Activated T-helper 1 cell treated with anti-CD3 and anti-CD28 coated beads, Interleukin-12 subunit alpha, Interleukin-12 subunit beta, Interleukin-2, Interleukin-4 antibody, amounts not matched to agents 30 ng/mL and 10 ng/mL and 1 ng/mL, durations not matched to agents 14 hours and 24 hours and 36 hours (primary cell): ENCODE measurements at regions of chr6 and their contacts with region 1.

Region 1: DNA sequence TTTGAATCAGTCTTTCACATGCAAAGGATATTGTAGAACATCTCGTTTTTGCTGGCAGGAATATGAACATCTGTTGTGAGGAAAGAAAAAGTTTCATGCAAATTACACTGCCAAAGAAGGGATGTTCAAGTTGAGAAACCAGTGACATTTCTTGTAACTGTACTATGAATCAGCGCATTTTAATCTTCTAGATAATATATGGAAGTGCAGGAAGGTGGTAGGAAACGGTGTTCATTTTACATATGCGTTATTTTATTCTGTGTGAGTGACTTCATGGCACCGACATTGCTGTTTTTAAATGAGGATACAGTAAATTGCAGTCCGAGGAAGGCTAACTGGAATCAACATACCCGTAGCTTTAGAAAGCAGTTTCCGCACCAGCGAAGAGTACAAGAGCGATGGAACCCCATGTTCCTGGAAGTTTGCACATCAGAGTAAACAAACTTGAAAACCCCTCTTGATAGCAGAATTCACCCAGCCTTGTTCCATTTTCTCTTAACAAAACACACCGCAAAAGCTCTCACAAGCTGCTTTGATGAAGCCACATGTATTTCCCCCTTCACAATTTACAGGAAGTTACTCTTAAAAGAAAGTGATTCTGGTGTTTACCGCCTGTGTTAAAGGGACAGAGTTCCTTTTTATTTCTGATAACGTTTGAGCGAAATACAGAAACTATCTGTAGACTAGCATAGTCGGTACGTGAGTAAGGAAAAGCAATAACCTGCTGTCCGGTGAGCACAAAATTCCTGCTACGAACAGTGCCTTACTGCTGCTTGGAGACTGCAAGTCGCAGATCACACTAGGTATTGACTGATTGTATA is 11.5 kb downstream of the PRDM1 start:
- DNase-seq: peak; percentile 72
- H3K4me3 Mint-ChIP-seq: peak overlapping the region; percentile 89
- H3K27ac Mint-ChIP-seq: peak overlapping the region; percentile 96
- H3K4me1 Mint-ChIP-seq: peaks cover 91% of the 10 kb centered on the region
- H3K27me3 Mint-ChIP-seq: no peaks in the 10 kb centered on the region

Region 2: GRCh38 chr6:105431226-105431625 is 666.4 kb before region 1 on chr6:
- intact Hi-C with region 1: loop called (anchors 2 kb)
- DNase-seq: peak; percentile 12
- H3K4me3 Mint-ChIP-seq: no peak overlapping the region
- H3K27ac Mint-ChIP-seq: no peak overlapping the region
- H3K4me1 Mint-ChIP-seq: peaks cover 5% of the 10 kb centered on the region
- H3K27me3 Mint-ChIP-seq: peaks cover 35% of the 10 kb centered on the region

Region 3: GRCh38 chr6:105793130-105793529 is 304.5 kb before region 1 on chr6:
- intact Hi-C with region 1: loop called (anchors 1 kb)
- DNase-seq: no peak
- H3K4me3 Mint-ChIP-seq: peak overlapping the region; percentile 5
- H3K27ac Mint-ChIP-seq: peak overlapping the region; percentile 66
- H3K4me1 Mint-ChIP-seq: peaks cover 86% of the 10 kb centered on the region
- H3K27me3 Mint-ChIP-seq: no peaks in the 10 kb centered on the region

Region 4: GRCh38 chr6:105992315-105992961 is 105.2 kb before region 1 on chr6:
- intact Hi-C with region 1: loop called (anchors 1 kb)
- DNase-seq: peak; percentile 91
- H3K4me3 Mint-ChIP-seq: peak overlapping the region; percentile 89
- H3K27ac Mint-ChIP-seq: peak overlapping the region; percentile 96
- H3K4me1 Mint-ChIP-seq: peaks cover 66% of the 10 kb centered on the region
- H3K27me3 Mint-ChIP-seq: peaks cover 24% of the 10 kb centered on the region

Region 5: DNA sequence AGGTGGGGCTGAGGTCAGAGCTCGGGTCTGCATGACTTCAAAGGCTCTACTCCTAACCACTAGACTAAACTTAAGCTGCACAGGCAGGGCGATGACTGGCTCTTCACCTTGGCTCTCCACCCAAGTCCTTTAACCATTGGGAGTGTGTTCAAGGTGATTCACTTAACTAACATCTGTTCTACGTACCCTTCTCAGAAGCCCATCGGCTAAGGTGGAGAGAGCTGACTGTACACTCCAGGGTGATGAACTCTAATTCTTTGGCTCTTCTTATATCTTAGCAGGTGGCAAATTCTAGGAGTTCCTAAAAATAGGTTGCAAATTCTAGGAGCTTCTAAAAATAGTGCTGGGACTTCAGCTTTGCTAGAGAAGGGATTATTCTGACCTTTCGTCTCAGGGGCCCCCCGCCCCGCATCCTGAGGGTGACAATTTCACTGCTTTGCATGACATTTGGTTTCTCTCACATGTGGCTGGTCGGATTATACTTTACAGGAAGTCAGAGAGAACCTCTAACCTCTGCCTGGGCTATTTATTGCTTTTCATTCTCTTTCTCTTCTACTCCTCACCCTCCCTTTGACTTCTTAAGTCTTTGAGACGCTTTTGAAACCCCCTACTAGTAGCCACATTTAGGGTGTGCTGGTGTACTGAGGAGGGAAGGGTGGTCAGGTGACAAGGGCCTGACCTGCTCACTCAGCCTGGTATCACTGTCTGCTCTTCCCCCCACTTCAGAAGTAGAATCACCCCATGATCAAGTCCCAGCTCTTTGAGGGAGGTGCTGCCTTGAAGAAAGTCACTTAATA is 44.0 kb after region 1 on chr6:
- intact Hi-C with region 1: loop called (anchors 1 kb)
- DNase-seq: peak; percentile 51
- H3K4me3 Mint-ChIP-seq: peak overlapping the region; percentile 59
- H3K27ac Mint-ChIP-seq: peak overlapping the region; percentile 90
- H3K4me1 Mint-ChIP-seq: peaks cover 70% of the 10 kb centered on the region
- H3K27me3 Mint-ChIP-seq: no peaks in the 10 kb centered on the region

Region 6: DNA sequence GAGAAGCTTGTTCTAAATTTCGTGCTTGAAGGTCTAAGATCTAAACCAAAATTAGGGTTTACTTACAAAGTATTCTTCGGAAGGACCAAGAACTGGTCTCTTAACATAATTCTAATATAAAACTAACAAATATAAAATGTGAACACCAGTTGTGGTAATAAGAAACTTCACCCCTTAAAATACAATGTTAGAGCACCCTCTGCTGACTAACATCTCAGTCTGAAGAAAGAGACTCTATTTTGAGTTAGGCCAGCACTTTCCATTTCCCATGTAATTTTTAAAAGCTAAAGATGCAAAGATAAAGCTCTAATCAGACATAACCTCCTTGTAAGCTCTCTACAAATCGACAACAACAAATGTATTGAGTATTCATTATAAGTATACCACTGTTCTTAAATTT is 203.3 kb after region 1 on chr6:
- intact Hi-C with region 1: loop called (anchors 5 kb)
- DNase-seq: no peak
- H3K4me3 Mint-ChIP-seq: no peak overlapping the region
- H3K27ac Mint-ChIP-seq: no peak overlapping the region
- H3K4me1 Mint-ChIP-seq: peaks cover 14% of the 10 kb centered on the region
- H3K27me3 Mint-ChIP-seq: no peaks in the 10 kb centered on the region

Region 7: GRCh38 chr6:106501960-106502371 is 404.3 kb after region 1 on chr6:
- intact Hi-C with region 1: no loop called
- DNase-seq: no peak
- H3K4me3 Mint-ChIP-seq: no peak overlapping the region
- H3K27ac Mint-ChIP-seq: no peak overlapping the region
- H3K4me1 Mint-ChIP-seq: no peaks in the 10 kb centered on the region
- H3K27me3 Mint-ChIP-seq: peaks cover 15% of the 10 kb centered on the region